ENCODE measurements at regions of chr1 and their contacts with region 1.

Region 1: GRCh38 chr1:223748773-223749733 is 36.7 kb downstream of the CAPN2 start:
- DNase-seq: peak; percentile 46 to 83 (median 66)
- ATAC-seq: peak; percentile 91
- H3K4me3 ChIP-seq: peak overlapping the region; percentile 55 to 58
- H3K4me3 Mint-ChIP-seq: peak overlapping the region; percentile 86
- H3K27ac ChIP-seq: peak overlapping the region in 1 of 2 experiments; percentile 36
- H3K27ac Mint-ChIP-seq: no peak overlapping the region
- H3K4me1 ChIP-seq: peaks cover 4% of the 10 kb centered on the region
- H3K4me1 Mint-ChIP-seq: no peaks in the 10 kb centered on the region
- H3K27me3 ChIP-seq: no peaks in the 10 kb centered on the region
- H3K27me3 Mint-ChIP-seq: no peaks in the 10 kb centered on the region
- CTCF ChIP-seq: peak; percentile 88

Region 2: GRCh38 chr1:223695941-223696340 is 53.1 kb before region 1 on chr1:
- CTCF ChIA-PET with region 1: interaction called, 135 read pairs
- POLR2A ChIA-PET with region 1: interaction called, 3 read pairs
- intact Hi-C with region 1: loop called (anchors 1 kb)
- DNase-seq: no peak
- ATAC-seq: no peak
- H3K4me3 ChIP-seq: no peak overlapping the region
- H3K4me3 Mint-ChIP-seq: no peak overlapping the region
- H3K27ac ChIP-seq: no peak overlapping the region
- H3K27ac Mint-ChIP-seq: no peak overlapping the region
- H3K4me1 ChIP-seq: peaks cover 7% of the 10 kb centered on the region
- H3K4me1 Mint-ChIP-seq: peaks cover 6% of the 10 kb centered on the region
- H3K27me3 ChIP-seq: no peaks in the 10 kb centered on the region
- H3K27me3 Mint-ChIP-seq: no peaks in the 10 kb centered on the region
- CTCF ChIP-seq: no peak

Region 3: GRCh38 chr1:223712194-223712849 is 36.7 kb before region 1 on chr1 and contains the start of gene CAPN2:
- CTCF ChIA-PET with region 1: interaction called, 67 read pairs
- POLR2A ChIA-PET with region 1: interaction called, 6 read pairs
- intact Hi-C with region 1: loop called (anchors 1 kb)
- DNase-seq: peak; percentile 20 to 83 (median 58)
- ATAC-seq: peak; percentile 49
- H3K4me3 ChIP-seq: peak within 1 kb of the TSS; percentile 64 to 81
- H3K4me3 Mint-ChIP-seq: peak within 1 kb of the TSS; percentile 90
- H3K27ac ChIP-seq: peak within 1 kb of the TSS; percentile 62 to 85
- H3K27ac Mint-ChIP-seq: peak within 1 kb of the TSS; percentile 93
- H3K4me1 ChIP-seq: peaks cover 57% of the 10 kb centered on the region
- H3K4me1 Mint-ChIP-seq: peaks cover 56% of the 10 kb centered on the region
- H3K27me3 ChIP-seq: no peaks in the 10 kb centered on the region
- H3K27me3 Mint-ChIP-seq: no peaks in the 10 kb centered on the region
- CTCF ChIP-seq: peak; percentile 50
- total RNA-seq, gene CAPN2: 83.0 to 84.7 TPM

Region 4: DNA sequence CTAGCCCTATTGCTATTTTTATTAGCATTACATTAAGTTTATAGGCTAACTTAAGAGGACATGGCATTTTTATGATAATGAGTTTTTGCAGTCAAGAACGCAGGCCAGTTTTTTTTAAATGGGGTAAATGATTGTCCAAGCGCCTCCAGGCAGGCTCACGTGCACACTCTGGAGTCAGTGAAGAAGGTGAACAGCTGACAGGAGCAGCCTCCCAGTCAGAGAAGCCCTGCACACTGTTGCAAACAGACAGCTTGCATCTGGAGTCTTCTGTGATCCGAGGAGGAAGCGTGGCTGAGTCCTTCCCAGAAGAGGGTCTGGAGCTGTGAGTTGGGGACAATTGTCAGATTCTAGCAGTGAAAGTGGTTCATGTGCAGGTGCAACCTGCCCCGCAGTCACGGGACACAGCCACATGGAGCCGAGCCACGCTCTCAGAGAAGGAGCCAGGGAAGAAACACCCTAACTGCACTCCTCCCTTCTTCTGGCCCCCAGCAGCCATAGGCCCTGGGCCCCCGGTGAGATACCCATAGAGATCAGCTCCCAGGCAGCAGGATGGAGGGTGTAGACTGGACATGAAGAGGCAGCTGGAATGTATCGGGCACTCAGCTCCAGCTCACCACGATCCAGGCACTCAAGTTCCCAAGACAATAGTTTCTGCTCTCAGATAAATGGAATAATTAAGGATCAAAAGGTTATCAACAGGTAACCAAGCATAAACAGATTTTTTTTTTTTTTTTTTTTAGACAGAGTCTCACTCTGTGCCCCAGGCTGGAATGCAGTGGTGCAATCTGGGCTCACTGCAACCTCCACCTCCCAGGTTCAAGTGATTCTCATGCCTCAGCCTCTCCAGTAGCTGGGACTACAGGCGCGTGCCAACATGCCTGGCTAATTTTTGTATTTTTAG is 10.3 kb before region 1 on chr1:
- CTCF ChIA-PET with region 1: interaction called, 89 read pairs
- POLR2A ChIA-PET with region 1: no interaction called
- intact Hi-C with region 1: no loop called
- DNase-seq: no peak
- ATAC-seq: no peak
- H3K4me3 ChIP-seq: no peak overlapping the region
- H3K4me3 Mint-ChIP-seq: no peak overlapping the region
- H3K27ac ChIP-seq: no peak overlapping the region
- H3K27ac Mint-ChIP-seq: no peak overlapping the region
- H3K4me1 ChIP-seq: peaks cover 4% of the 10 kb centered on the region
- H3K4me1 Mint-ChIP-seq: peaks cover 6% of the 10 kb centered on the region
- H3K27me3 ChIP-seq: no peaks in the 10 kb centered on the region
- H3K27me3 Mint-ChIP-seq: no peaks in the 10 kb centered on the region
- CTCF ChIP-seq: no peak

Region 5: DNA sequence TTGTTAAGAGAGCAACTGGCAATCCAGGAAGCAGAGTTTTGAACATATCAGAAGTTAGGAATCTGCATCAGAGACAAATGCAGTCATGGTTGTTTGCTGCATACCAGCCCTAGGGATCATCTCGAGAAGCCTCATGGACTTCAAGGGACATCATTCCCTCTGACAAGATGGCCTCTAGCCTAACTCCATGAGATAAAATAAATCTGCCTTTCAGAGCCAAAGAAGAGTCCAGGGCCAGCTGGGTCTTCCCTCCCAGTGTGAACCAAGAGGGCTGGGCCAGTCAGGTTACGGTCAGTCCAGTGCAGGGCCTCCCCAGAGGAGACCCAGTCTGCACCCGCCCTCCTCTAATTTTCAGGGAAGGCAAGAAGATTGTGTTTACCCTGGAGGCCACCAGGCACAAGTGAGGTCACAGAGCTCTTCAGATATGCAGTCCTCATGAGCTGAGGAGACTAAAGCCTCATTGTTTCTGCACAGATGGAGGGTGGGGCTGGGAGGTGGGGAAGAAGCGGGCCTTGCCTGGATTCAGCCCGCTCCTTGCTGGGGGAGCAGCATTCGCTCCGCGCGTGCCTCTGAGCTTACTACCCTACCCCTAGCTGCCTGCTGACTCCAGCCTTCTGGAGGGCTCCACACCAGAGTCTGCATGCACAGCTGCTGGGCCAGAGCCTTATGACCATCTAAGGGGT is 16.1 kb after region 1 on chr1:
- CTCF ChIA-PET with region 1: interaction called, 17 read pairs
- POLR2A ChIA-PET with region 1: interaction called, 4 read pairs
- intact Hi-C with region 1: no loop called
- DNase-seq: no peak
- ATAC-seq: no peak
- H3K4me3 ChIP-seq: no peak overlapping the region
- H3K4me3 Mint-ChIP-seq: no peak overlapping the region
- H3K27ac ChIP-seq: no peak overlapping the region
- H3K27ac Mint-ChIP-seq: no peak overlapping the region
- H3K4me1 ChIP-seq: no peaks in the 10 kb centered on the region
- H3K4me1 Mint-ChIP-seq: no peaks in the 10 kb centered on the region
- H3K27me3 ChIP-seq: no peaks in the 10 kb centered on the region
- H3K27me3 Mint-ChIP-seq: no peaks in the 10 kb centered on the region
- CTCF ChIP-seq: no peak

Measured in CD8-positive, alpha-beta T cell (primary cell).